IMR-90 (cell line): ENCODE measurements at regions of chr6 and their contacts with region 1.

Region 1: DNA sequence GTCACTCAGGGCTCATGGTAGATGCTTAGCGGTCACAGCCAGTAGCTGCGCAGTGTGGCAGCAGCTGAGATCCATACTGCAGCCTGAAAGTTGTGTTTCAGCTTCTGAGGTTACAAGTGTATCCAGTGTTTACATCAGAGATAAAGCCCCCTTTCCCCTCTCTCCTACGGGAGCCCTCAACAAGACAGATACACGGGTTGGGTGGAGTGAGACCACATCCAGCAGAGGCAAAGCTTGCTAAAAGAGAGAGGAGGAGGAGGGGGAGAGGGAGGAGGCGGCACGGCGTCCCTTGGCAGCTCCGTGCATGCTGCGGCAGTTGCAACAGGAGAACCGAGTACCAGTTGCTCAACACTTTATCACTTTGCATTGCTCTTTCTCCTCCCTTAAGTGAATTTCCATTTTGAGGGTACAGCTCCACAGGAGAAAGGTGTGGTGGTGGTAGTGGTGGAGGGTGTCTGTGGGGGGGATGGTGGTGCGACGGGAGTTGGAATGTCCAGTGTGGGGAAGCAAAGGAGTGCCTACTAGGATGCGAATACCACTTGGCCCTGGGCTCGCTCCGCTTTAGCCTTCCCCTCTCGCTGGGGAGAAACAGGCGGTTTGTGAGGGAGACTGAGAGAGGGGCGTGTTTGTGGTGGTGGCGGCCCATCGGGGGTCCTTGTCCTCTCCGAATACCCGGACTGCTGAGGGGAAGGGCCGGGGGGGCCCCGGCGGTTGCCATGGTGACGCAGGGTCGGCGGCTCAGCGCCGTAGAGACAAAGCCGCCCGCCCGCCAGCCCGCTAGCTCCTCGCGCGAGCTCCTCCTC is 405 bp upstream of the RNF182 start:
- DNase-seq: peak; percentile 36
- ATAC-seq: peak; percentile 88
- H3K4me3 ChIP-seq: peak overlapping the region; percentile 57
- H3K27ac ChIP-seq: peak overlapping the region; percentile 70
- H3K4me1 ChIP-seq: peaks cover 2% of the 10 kb centered on the region
- H3K27me3 ChIP-seq: peaks cover 4% of the 10 kb centered on the region; the same call in 1 of the 2 replicates
- CTCF ChIP-seq: no peak
- POLR2A ChIP-seq: no peak
- RAD21 ChIP-seq: no peak

Region 2: DNA sequence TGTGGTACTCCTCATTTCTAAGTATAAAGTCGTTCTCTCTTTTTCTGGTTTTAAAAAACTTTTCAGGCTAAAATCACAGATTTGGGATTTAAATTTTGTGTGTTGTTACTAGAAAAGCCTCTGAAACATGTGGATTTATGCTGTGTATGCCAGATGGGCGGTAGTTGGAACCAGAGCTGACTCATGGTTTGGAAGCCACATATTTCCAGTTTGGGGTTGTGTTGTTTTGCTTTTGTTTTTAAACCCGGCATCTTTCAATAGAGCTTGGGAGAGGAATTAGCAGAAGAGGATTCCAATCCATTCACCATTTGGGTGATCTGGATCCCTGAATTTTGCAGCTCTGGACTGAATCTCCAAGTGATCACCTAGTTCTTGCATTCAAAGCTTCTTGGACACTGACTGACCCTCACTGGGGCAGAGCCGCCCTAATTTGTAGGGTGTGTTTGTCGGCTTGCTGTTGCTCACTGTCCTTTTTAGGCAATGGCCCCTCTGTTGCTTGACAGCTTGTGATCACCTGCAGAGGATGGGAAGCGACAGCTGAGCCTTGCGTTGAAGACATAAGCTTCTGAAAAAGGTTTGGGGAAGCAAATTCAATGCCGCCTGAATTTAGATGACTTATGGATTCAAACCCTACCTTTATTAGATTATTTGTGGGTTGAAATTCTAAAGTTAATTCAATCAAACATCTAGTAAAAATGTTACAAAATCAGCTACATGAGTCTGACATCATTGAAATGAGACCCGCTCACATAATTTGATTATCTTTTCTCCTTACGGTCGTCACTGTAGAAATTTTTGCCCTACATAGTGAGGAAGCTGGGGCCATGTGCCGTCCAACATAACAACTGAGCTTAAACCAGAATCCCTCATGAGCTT is 113.3 kb after region 1 on chr6:
- CTCF ChIA-PET with region 1: no interaction called
- POLR2A ChIA-PET with region 1: interaction called, 8 read pairs
- dilution Hi-C with region 1: no loop called
- in situ Hi-C with region 1: no loop called
- intact Hi-C with region 1: loop called (anchors 5 kb)
- DNase-seq: peak; percentile 80
- ATAC-seq: peak; percentile 22
- H3K4me3 ChIP-seq: no peak overlapping the region; the same call in 1 of the 2 replicates
- H3K27ac ChIP-seq: peak overlapping the region; percentile 91
- H3K4me1 ChIP-seq: peaks cover 18% of the 10 kb centered on the region
- H3K27me3 ChIP-seq: no peaks in the 10 kb centered on the region
- CTCF ChIP-seq: no peak
- POLR2A ChIP-seq: no peak
- RAD21 ChIP-seq: no peak

Region 3: DNA sequence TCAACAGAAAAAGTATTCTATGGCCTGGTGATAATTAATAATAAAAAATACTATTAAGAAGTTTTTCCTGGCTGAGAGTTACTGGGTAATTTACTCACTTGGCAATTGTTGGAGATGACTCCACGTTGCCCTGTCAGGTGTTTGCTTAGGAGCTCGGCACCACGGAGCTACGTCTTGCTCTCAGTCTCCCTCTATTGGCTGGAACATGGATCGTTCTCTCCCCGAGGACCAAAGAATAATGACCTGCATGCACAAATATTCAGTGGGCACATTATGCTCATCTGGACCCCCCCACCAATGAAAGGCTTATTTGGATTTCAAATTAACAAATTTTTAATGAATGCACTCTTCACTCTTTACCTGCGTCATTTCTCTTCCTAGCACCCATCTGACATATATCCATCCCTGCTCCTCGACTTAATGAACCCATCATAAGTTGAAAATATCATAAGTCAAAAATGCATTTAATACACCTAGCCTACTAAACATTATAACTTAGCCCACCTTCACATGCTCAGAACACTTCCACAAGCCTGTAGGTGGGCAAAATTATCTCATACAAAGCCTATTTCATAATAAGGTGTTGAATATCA is 122.2 kb after region 1 on chr6:
- CTCF ChIA-PET with region 1: interaction called, 13 read pairs
- POLR2A ChIA-PET with region 1: no interaction called
- dilution Hi-C with region 1: no loop called
- in situ Hi-C with region 1: no loop called
- intact Hi-C with region 1: no loop called
- DNase-seq: peak; percentile 48
- ATAC-seq: peak; percentile 88
- H3K4me3 ChIP-seq: no peak overlapping the region
- H3K27ac ChIP-seq: no peak overlapping the region
- H3K4me1 ChIP-seq: no peaks in the 10 kb centered on the region
- H3K27me3 ChIP-seq: peaks cover 12% of the 10 kb centered on the region
- CTCF ChIP-seq: peak; percentile 66
- POLR2A ChIP-seq: no peak
- RAD21 ChIP-seq: peak; percentile 71